B cell (primary cell): ENCODE measurements at regions of chr18 and their contacts with region 1.

Region 1: DNA sequence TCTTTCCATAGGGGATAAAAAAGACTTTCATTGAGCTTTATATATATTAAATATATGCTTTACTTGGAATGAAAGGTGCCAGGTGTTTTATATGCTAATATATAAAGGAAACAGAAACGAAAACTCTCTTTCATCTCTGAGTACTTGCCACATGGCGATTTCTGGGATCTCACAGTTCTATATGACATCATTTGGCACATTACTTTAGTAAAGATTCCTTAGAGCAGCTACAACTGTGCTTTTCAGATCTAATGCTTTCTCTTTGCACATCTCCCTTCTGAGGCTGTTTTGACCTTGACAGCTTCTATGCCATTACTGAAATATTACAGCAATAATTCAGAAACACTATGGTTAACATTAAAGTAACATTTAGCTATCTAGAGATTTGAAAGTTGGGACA is 1082.9 kb upstream of the CDH2 start:
- DNase-seq: no peak
- ATAC-seq: no peak
- H3K4me3 ChIP-seq: no peak overlapping the region
- H3K4me3 Mint-ChIP-seq: no peak overlapping the region
- H3K27ac ChIP-seq: no peak overlapping the region
- H3K27ac Mint-ChIP-seq: no peak overlapping the region
- H3K4me1 ChIP-seq: no peaks in the 10 kb centered on the region
- H3K4me1 Mint-ChIP-seq: no peaks in the 10 kb centered on the region
- H3K27me3 ChIP-seq: no peaks in the 10 kb centered on the region
- H3K27me3 Mint-ChIP-seq: no peaks in the 10 kb centered on the region
- CTCF ChIP-seq: no peak

Region 2: GRCh38 chr18:29218091-29218490 is 41.7 kb before region 1 on chr18:
- CTCF ChIA-PET with region 1: no interaction called
- POLR2A ChIA-PET with region 1: no interaction called
- intact Hi-C with region 1: loop called (anchors 10 kb)
- DNase-seq: no peak
- ATAC-seq: no peak
- H3K4me3 ChIP-seq: no peak overlapping the region
- H3K4me3 Mint-ChIP-seq: no peak overlapping the region
- H3K27ac ChIP-seq: no peak overlapping the region
- H3K27ac Mint-ChIP-seq: no peak overlapping the region
- H3K4me1 ChIP-seq: no peaks in the 10 kb centered on the region
- H3K4me1 Mint-ChIP-seq: no peaks in the 10 kb centered on the region
- H3K27me3 ChIP-seq: no peaks in the 10 kb centered on the region
- H3K27me3 Mint-ChIP-seq: no peaks in the 10 kb centered on the region
- CTCF ChIP-seq: no peak